ENCODE measurements at regions of chr1 and their contacts with region 1.

Region 1: GRCh38 chr1:161045750-161046571 is at the start of gene USF1:
- DNase-seq: peak; percentile 95
- H3K4me3 Mint-ChIP-seq: peak within 1 kb of the TSS; percentile 88
- H3K27ac Mint-ChIP-seq: peak within 1 kb of the TSS; percentile 99
- H3K4me1 Mint-ChIP-seq: peaks cover 32% of the 10 kb centered on the region
- H3K27me3 Mint-ChIP-seq: no peaks in the 10 kb centered on the region
- total RNA-seq, gene USF1: 43.7 to 44.2 TPM

Region 2: GRCh38 chr1:161059293-161059692 is 13.3 kb after region 1 on chr1:
- CTCF ChIA-PET with region 1: interaction called, 11 read pairs
- intact Hi-C with region 1: no loop called
- DNase-seq: no peak
- H3K4me3 Mint-ChIP-seq: no peak overlapping the region
- H3K27ac Mint-ChIP-seq: peak overlapping the region; percentile 87
- H3K4me1 Mint-ChIP-seq: peaks cover 53% of the 10 kb centered on the region
- H3K27me3 Mint-ChIP-seq: no peaks in the 10 kb centered on the region

Region 3: GRCh38 chr1:161119092-161119903 is 73.3 kb after region 1 on chr1:
- CTCF ChIA-PET with region 1: no interaction called
- intact Hi-C with region 1: loop called (anchors 2 kb)
- DNase-seq: peak; percentile 86
- H3K4me3 Mint-ChIP-seq: peak overlapping the region; percentile 92
- H3K27ac Mint-ChIP-seq: peak overlapping the region; percentile 88
- H3K4me1 Mint-ChIP-seq: peaks cover 64% of the 10 kb centered on the region
- H3K27me3 Mint-ChIP-seq: no peaks in the 10 kb centered on the region

Region 4: GRCh38 chr1:161153679-161154426 is 107.9 kb after region 1 on chr1 and contains the start of gene UFC1:
- CTCF ChIA-PET with region 1: interaction called, 3 read pairs
- intact Hi-C with region 1: loop called (anchors 1 kb)
- DNase-seq: peak; percentile 88
- H3K4me3 Mint-ChIP-seq: peak within 1 kb of the TSS; percentile 95
- H3K27ac Mint-ChIP-seq: peak within 1 kb of the TSS; percentile 99
- H3K4me1 Mint-ChIP-seq: peaks cover 22% of the 10 kb centered on the region
- H3K27me3 Mint-ChIP-seq: no peaks in the 10 kb centered on the region
- total RNA-seq, gene UFC1: 89.4 to 94.9 TPM

Region 5: DNA sequence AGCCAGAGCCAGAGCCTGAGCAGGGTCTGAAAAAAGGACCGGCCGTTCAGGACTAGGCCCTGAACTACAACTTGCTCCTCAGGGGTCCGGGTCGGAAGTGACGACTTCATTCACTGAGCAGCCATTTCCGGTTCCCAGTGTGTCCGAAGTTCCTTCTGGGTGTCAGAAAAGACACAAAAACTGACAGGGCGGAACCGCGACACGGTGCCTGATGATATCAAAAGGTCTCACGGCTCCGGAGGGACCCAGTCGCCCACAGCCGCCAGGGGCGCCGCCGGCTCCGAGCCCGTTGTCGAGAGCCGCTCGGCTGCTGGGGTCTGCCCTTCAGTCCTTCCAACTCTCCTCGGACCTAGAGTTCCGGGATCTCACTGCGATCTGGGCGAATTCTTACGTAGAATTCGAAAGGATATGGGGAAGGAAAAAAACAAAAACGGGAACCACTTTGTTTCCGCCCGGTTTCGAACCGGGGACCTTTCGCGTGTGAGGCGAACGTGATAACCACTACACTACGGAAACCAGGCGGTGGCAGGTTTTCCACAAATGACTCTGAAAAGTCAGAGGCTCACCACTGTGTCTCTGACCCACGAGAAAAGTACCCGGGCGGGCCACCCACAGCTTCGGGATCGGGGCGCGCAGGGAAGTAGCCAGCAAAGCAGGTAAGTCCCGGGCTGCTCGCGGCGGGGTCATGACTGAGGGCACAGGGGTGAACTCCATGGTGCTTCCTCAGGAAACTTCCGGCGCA is 353.5 kb after region 1 on chr1:
- CTCF ChIA-PET with region 1: no interaction called
- intact Hi-C with region 1: no loop called
- DNase-seq: peak; percentile 94
- H3K4me3 Mint-ChIP-seq: peak overlapping the region; percentile 96
- H3K27ac Mint-ChIP-seq: peak overlapping the region; percentile 100
- H3K4me1 Mint-ChIP-seq: peaks cover 25% of the 10 kb centered on the region
- H3K27me3 Mint-ChIP-seq: peaks cover 6% of the 10 kb centered on the region

Measured in activated naive CD4-positive, alpha-beta T cell treated with anti-CD3 and anti-CD28 coated beads for 36 hours (primary cell).